Dendritic cell treated with granulocyte-macrophage colony-stimulating factor and Interleukin-4, amounts not matched to agents 40 ng/mL and 50 ng/mL, for 4 days (primary cell): ENCODE measurements at regions of chr5 and their contacts with region 1.

Region 1: GRCh38 chr5:96633820-96634219 is 28.4 kb upstream of the CAST start:
- H3K4me3 Mint-ChIP-seq: no peak overlapping the region
- H3K27ac Mint-ChIP-seq: peak overlapping the region; percentile 40
- H3K4me1 Mint-ChIP-seq: peaks cover 27% of the 10 kb centered on the region
- H3K27me3 Mint-ChIP-seq: no peaks in the 10 kb centered on the region

Region 2: GRCh38 chr5:96648023-96648422 is 14.2 kb after region 1 on chr5:
- intact Hi-C with region 1: loop called (anchors 2 kb)
- H3K4me3 Mint-ChIP-seq: no peak overlapping the region
- H3K27ac Mint-ChIP-seq: peak overlapping the region; percentile 35
- H3K4me1 Mint-ChIP-seq: peaks cover 41% of the 10 kb centered on the region
- H3K27me3 Mint-ChIP-seq: no peaks in the 10 kb centered on the region

Region 3: DNA sequence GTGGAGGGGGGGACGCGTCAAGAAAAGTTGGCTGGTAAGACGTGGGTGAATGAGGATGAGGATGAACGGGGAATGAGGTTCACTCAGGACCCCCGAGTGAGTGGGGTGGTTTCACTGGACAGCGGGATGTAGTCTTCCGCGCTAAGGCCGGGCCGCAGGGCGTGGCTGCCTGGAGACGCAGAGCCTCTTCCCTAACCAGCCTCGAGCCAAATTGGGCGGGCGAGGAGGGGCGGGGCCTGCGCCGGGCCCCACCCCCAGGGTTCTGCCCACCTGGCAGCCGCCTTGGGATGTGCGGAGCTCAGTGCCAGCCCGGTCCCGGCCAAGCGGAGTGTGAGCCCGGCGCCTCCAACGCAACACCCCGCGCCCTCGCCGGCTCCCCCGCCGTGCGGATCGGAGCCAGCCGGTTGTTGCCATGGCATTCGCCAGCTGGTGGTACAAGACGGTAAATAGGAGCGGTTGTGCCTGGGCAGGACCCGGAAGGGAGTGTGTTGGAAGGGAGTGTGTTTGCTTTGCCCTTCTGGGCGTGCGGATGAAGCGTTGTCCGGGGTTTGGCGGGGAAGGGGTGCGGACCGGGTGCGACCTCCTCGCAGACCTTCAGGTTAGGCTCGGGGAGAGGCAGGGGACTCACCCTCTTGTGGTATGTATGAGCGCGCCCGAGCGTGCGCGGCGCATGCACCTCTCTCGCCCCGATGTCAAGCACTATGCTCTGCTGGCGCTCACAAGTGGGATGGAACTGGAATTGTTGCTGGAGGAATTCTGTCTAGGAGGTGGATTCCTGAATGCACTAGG is 29.1 kb after region 1 on chr5:
- intact Hi-C with region 1: loop called (anchors 1 kb)
- H3K4me3 Mint-ChIP-seq: peak overlapping the region; percentile 88
- H3K27ac Mint-ChIP-seq: peak overlapping the region; percentile 97
- H3K4me1 Mint-ChIP-seq: peaks cover 42% of the 10 kb centered on the region
- H3K27me3 Mint-ChIP-seq: no peaks in the 10 kb centered on the region

Region 4: GRCh38 chr5:96855031-96855872 is 221.4 kb after region 1 on chr5:
- intact Hi-C with region 1: no loop called
- H3K4me3 Mint-ChIP-seq: no peak overlapping the region
- H3K27ac Mint-ChIP-seq: peak overlapping the region; percentile 50
- H3K4me1 Mint-ChIP-seq: peaks cover 28% of the 10 kb centered on the region
- H3K27me3 Mint-ChIP-seq: no peaks in the 10 kb centered on the region